ENCODE measurements at regions of chr2 and their contacts with region 1.

Region 1: DNA sequence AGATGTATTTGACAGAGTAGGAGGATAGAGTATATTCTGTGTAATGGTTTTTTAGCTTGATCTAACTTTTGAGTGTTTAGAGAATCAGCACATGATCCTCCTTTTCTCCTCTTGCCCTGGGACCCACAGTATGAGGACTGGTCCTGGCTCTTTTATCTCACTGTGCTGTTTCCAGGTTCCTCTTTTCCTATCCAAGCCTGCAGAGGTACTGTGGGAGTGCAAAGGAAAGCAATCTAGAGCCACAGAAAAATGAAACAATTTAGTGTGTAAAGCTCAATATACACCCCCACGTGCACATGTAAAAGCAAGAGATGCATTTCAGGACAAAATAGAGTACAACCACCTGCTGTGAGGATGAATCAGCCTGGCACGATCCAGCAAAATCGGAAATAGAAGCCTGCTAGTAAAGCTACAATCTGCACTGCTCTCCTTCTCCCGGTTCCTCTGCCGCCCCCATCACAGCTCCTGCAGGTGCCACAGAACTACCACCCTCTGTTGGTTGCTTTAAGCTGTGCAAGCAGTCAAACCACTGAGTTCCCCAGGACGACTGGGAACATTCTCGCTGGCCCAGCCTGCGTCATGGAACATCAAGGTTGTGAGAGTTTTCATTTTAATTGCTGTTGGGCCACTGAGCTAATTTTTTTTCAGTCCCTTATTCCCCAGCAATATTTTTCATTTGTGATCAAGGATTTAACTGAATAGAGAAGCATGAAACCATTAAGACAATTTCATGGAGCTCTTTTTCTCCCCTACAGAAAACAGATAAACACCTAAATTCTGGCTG is 47.8 kb upstream of the MAPRE3 start:
- DNase-seq: peak; percentile 60
- H3K4me3 Mint-ChIP-seq: no peak overlapping the region
- H3K27ac Mint-ChIP-seq: no peak overlapping the region
- H3K4me1 Mint-ChIP-seq: peaks cover 8% of the 10 kb centered on the region
- H3K27me3 Mint-ChIP-seq: peaks cover 11% of the 10 kb centered on the region

Region 2: GRCh38 chr2:26942543-26943295 is 20.1 kb after region 1 on chr2:
- CTCF ChIA-PET with region 1: interaction called, 13 read pairs
- POLR2A ChIA-PET with region 1: no interaction called
- intact Hi-C with region 1: no loop called
- DNase-seq: peak; percentile 78
- H3K4me3 Mint-ChIP-seq: no peak overlapping the region
- H3K27ac Mint-ChIP-seq: no peak overlapping the region
- H3K4me1 Mint-ChIP-seq: peaks cover 2% of the 10 kb centered on the region
- H3K27me3 Mint-ChIP-seq: peaks cover 17% of the 10 kb centered on the region

Region 3: GRCh38 chr2:28233164-28233676 is 1310.6 kb after region 1 on chr2:
- CTCF ChIA-PET with region 1: no interaction called
- POLR2A ChIA-PET with region 1: no interaction called
- intact Hi-C with region 1: no loop called
- DNase-seq: no peak
- H3K4me3 Mint-ChIP-seq: no peak overlapping the region
- H3K27ac Mint-ChIP-seq: no peak overlapping the region
- H3K4me1 Mint-ChIP-seq: no peaks in the 10 kb centered on the region
- H3K27me3 Mint-ChIP-seq: no peaks in the 10 kb centered on the region

Measured in activated CD4-positive, alpha-beta memory T cell treated with anti-CD3 and anti-CD28 coated beads for 36 hours (primary cell).